Activated CD8-positive, alpha-beta T cell treated with anti-CD3 and anti-CD28 coated beads for 36 hours (primary cell): ENCODE measurements at regions of chr10 and their contacts with region 1.

Region 1: DNA sequence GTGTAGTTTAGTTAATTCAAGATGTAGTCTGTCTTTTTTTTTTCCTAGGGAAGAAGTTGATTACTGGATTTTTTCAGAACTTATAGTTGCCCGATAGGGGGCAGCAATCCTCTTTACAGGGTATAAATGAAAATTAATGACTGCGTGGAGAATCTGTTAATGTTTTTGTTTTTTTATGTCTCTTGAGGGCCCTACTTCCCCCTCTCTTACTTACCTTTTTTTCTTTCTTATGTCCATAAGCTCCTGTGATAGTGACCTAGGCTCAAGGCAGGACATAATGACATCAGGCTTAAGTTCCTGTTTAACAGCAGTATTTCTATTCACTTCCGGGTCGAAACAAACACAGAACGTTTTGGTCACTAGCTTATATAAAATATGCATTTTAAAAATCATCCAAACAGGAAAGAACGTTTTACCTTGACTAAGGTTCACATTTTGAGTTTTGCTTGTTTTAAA is 18.8 kb downstream of the CDC123 start:
- DNase-seq: peak; percentile 45
- ATAC-seq: peak; percentile 37
- H3K4me3 Mint-ChIP-seq: peak overlapping the region; percentile 20
- H3K27ac Mint-ChIP-seq: peak overlapping the region; percentile 80
- H3K4me1 Mint-ChIP-seq: peaks cover 12% of the 10 kb centered on the region
- H3K27me3 Mint-ChIP-seq: no peaks in the 10 kb centered on the region
- CTCF ChIP-seq: peak; percentile 85

Region 2: GRCh38 chr10:12181065-12181775 is 33.6 kb before region 1 on chr10:
- CTCF ChIA-PET with region 1: interaction called, 10 read pairs
- POLR2A ChIA-PET with region 1: no interaction called
- intact Hi-C with region 1: no loop called
- DNase-seq: peak; percentile 88
- ATAC-seq: peak; percentile 99
- H3K4me3 Mint-ChIP-seq: no peak overlapping the region
- H3K27ac Mint-ChIP-seq: peak overlapping the region; percentile 93
- H3K4me1 Mint-ChIP-seq: peaks cover 25% of the 10 kb centered on the region
- H3K27me3 Mint-ChIP-seq: no peaks in the 10 kb centered on the region
- CTCF ChIP-seq: no peak

Region 3: GRCh38 chr10:12201543-12201942 is 13.2 kb before region 1 on chr10:
- CTCF ChIA-PET with region 1: interaction called, 34 read pairs
- POLR2A ChIA-PET with region 1: interaction called, 6 read pairs
- intact Hi-C with region 1: no loop called
- DNase-seq: peak; percentile 43
- ATAC-seq: peak; percentile 82
- H3K4me3 Mint-ChIP-seq: no peak overlapping the region
- H3K27ac Mint-ChIP-seq: peak overlapping the region; percentile 80
- H3K4me1 Mint-ChIP-seq: peaks cover 48% of the 10 kb centered on the region
- H3K27me3 Mint-ChIP-seq: no peaks in the 10 kb centered on the region
- CTCF ChIP-seq: no peak

Region 4: GRCh38 chr10:12235796-12236195 is 21.0 kb after region 1 on chr10:
- CTCF ChIA-PET with region 1: interaction called, 13 read pairs
- POLR2A ChIA-PET with region 1: no interaction called
- intact Hi-C with region 1: no loop called
- DNase-seq: no peak
- ATAC-seq: no peak
- H3K4me3 Mint-ChIP-seq: no peak overlapping the region
- H3K27ac Mint-ChIP-seq: no peak overlapping the region
- H3K4me1 Mint-ChIP-seq: peaks cover 7% of the 10 kb centered on the region
- H3K27me3 Mint-ChIP-seq: no peaks in the 10 kb centered on the region
- CTCF ChIP-seq: no peak

Region 5: DNA sequence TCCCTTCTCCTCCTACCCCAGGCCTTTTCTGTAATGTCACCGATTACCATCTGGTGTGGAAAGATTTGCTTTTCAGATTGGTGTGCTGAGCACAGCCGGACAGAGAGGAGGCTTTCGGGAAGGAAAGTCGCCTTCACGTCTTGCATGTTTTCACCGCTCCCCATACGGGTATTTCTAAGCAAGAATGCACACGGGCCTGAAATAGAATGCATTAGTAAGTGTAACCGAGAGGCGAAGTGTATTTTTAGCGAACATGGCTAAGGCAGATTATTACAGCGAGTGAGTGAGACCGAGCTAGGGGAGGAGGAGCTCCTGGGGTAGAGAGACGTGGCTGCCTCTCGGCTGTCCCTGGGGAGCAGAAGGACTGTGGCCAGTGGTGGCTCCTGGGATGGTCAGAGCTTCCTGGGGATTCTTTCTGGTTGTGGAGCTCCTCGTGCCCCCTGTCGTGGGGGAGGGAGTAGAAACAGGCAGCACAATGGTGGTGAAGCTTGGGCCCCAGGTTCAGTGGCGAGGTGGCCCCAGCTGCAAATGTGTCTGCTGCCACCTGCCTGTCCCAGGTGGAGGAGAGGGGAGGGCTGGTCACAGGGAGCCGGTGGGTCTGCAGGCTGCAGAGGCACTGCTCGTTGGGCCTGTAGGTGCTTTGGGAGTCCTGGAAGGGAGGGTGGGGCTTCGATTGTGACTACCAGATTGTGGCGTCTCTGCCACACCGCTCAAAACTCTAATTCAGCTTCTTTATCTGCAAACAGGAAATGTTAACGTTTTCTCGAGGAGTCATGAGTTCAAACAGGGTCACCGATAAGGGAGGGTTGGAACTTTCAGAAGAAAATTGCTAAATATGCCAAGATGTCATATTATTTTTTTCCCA is 270.4 kb after region 1 on chr10:
- CTCF ChIA-PET with region 1: interaction called, 13 read pairs
- POLR2A ChIA-PET with region 1: no interaction called
- intact Hi-C with region 1: no loop called
- DNase-seq: peak; percentile 54
- ATAC-seq: peak; percentile 80
- H3K4me3 Mint-ChIP-seq: no peak overlapping the region
- H3K27ac Mint-ChIP-seq: peak overlapping the region; percentile 56
- H3K4me1 Mint-ChIP-seq: peaks cover 25% of the 10 kb centered on the region
- H3K27me3 Mint-ChIP-seq: no peaks in the 10 kb centered on the region
- CTCF ChIP-seq: no peak

Region 6: GRCh38 chr10:12710594-12711349 is 496.0 kb after region 1 on chr10:
- CTCF ChIA-PET with region 1: interaction called, 29 read pairs
- POLR2A ChIA-PET with region 1: no interaction called
- intact Hi-C with region 1: no loop called
- DNase-seq: peak; percentile 90
- ATAC-seq: peak; percentile 91
- H3K4me3 Mint-ChIP-seq: no peak overlapping the region
- H3K27ac Mint-ChIP-seq: peak overlapping the region; percentile 84
- H3K4me1 Mint-ChIP-seq: peaks cover 59% of the 10 kb centered on the region
- H3K27me3 Mint-ChIP-seq: no peaks in the 10 kb centered on the region
- CTCF ChIP-seq: peak; percentile 84